Aorta (tissue), 5 donors: ENCODE measurements at regions of chr6 and their contacts with region 1.

Region 1: GRCh38 chr6:2639896-2640295 is 110.8 kb downstream of the MYLK4 start:
- DNase-seq: no peak
- ATAC-seq: peak; percentile 27
- H3K4me3 ChIP-seq: no peak overlapping the region
- H3K27ac ChIP-seq: peak overlapping the region in 1 of 2 donors; percentile 9
- H3K4me1 ChIP-seq: no peaks in the 10 kb centered on the region
- H3K27me3 ChIP-seq: no peaks in the 10 kb centered on the region

Region 2: DNA sequence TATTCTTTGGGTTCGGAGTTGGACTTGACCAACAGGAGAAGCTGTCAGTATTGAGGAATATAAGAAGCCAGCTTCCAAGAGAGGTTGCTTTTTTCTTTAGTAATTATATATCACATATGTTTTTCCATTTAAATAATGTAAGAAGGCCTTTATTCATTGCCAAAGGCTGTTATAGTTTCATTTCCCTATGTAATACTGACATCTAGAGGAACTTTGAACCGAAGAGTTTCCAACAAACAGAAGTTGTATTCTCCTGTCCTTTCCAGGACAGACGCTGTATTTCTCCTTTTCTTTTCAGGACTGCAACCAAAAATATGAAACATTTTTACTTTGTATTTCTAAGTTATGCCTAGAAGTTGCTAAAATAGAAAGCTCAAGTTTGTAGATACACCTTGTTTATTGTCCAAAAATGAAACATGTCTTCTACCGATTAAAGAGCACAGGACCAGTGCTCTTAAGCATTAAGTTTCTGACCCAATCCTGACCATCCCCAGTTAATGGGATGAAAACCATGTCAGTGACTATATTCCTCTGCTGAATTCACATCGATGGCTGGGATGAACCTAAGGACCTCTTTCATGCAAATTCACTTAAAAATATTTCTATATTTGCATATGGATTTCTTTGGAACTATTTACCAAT is 55.7 kb after region 1 on chr6:
- intact Hi-C with region 1: loop called in 1 of 2 experiments (anchors 5 kb)
- DNase-seq: no peak
- ATAC-seq: no peak
- H3K4me3 ChIP-seq: no peak overlapping the region
- H3K27ac ChIP-seq: no peak overlapping the region
- H3K4me1 ChIP-seq: no peaks in the 10 kb centered on the region
- H3K27me3 ChIP-seq: no peaks in the 10 kb centered on the region